ENCODE measurements at regions of chr20 and their contacts with region 1.

Region 1: GRCh38 chr20:2800521-2801285 is at the start of gene CPXM1:
- DNase-seq: no peak
- H3K4me3 ChIP-seq: peak within 1 kb of the TSS in 1 of 3 experiments; percentile 26
- H3K27ac ChIP-seq: no peak within 1 kb of the TSS
- H3K4me1 ChIP-seq: peaks cover 6% of the 10 kb centered on the region
- H3K27me3 ChIP-seq: peaks cover 27% of the 10 kb centered on the region
- CTCF ChIP-seq: no peak
- total RNA-seq, gene CPXM1: under 0.01 TPM in 1 of 2 donors, not detected in the other

Region 2: GRCh38 chr20:2713285-2713684 is 87.4 kb before region 1 on chr20:
- CTCF ChIA-PET with region 1: no interaction called
- dilution Hi-C with region 1: loop called (anchors 5 kb)
- in situ Hi-C with region 1: no loop called
- intact Hi-C with region 1: no loop called
- DNase-seq: no peak
- H3K4me3 ChIP-seq: no peak overlapping the region
- H3K27ac ChIP-seq: no peak overlapping the region
- H3K4me1 ChIP-seq: no peaks in the 10 kb centered on the region
- H3K27me3 ChIP-seq: peaks cover 11% of the 10 kb centered on the region
- CTCF ChIP-seq: peak; percentile 7 to 49

Region 3: GRCh38 chr20:2729791-2730190 is 70.9 kb before region 1 on chr20:
- CTCF ChIA-PET with region 1: no interaction called
- dilution Hi-C with region 1: no loop called
- in situ Hi-C with region 1: loop called in 1 of 2 experiments (anchors 10 kb)
- intact Hi-C with region 1: no loop called
- DNase-seq: no peak
- H3K4me3 ChIP-seq: no peak overlapping the region
- H3K27ac ChIP-seq: no peak overlapping the region
- H3K4me1 ChIP-seq: no peaks in the 10 kb centered on the region
- H3K27me3 ChIP-seq: peaks cover 3% of the 10 kb centered on the region
- CTCF ChIP-seq: no peak

Region 4: GRCh38 chr20:2840138-2840966 is 39.6 kb after region 1 on chr20 and contains the starts of genes PCED1A and VPS16:
- CTCF ChIA-PET with region 1: no interaction called
- dilution Hi-C with region 1: no loop called
- in situ Hi-C with region 1: no loop called
- intact Hi-C with region 1: no loop called
- DNase-seq: peak; percentile 81
- H3K4me3 ChIP-seq: peak within 1 kb of the TSS; percentile 68 to 96 (median 80)
- H3K27ac ChIP-seq: peak within 1 kb of the TSS; percentile 59
- H3K4me1 ChIP-seq: peaks cover 14% of the 10 kb centered on the region
- H3K27me3 ChIP-seq: no peaks in the 10 kb centered on the region
- CTCF ChIP-seq: no peak
- total RNA-seq, gene PCED1A: 15.8 to 20.2 TPM
- total RNA-seq, gene VPS16: 28.5 to 35.2 TPM

Region 5: GRCh38 chr20:2859330-2860121 is 58.8 kb after region 1 on chr20:
- CTCF ChIA-PET with region 1: no interaction called
- dilution Hi-C with region 1: loop called (anchors 10 kb)
- in situ Hi-C with region 1: no loop called
- intact Hi-C with region 1: no loop called
- DNase-seq: no peak
- H3K4me3 ChIP-seq: no peak overlapping the region
- H3K27ac ChIP-seq: no peak overlapping the region
- H3K4me1 ChIP-seq: no peaks in the 10 kb centered on the region
- H3K27me3 ChIP-seq: no peaks in the 10 kb centered on the region
- CTCF ChIP-seq: no peak